Naive thymus-derived CD8-positive, alpha-beta T cell (primary cell): ENCODE measurements at regions of chr17 and their contacts with region 1.

Region 1: GRCh38 chr17:64420143-64420971 is 28.6 kb upstream of the MILR1 start:
- DNase-seq: peak in 6 of 10 donors; percentile 35 to 82 (median 62)
- ATAC-seq: peak; percentile 83 to 89
- H3K4me3 Mint-ChIP-seq: no peak overlapping the region
- H3K27ac Mint-ChIP-seq: no peak overlapping the region
- H3K4me1 Mint-ChIP-seq: peaks cover 0 to 4% (median 2%) of the 10 kb centered on the region in 4 donors
- H3K27me3 Mint-ChIP-seq: no peaks in the 10 kb centered on the region

Region 2: GRCh38 chr17:64306850-64307463 is 113.4 kb before region 1 on chr17:
- POLR2A ChIA-PET with region 1: interaction called, 10 read pairs
- DNase-seq: peak; percentile 47 to 82 (median 69)
- ATAC-seq: peak; percentile 63 to 75
- H3K4me3 Mint-ChIP-seq: no peak overlapping the region
- H3K27ac Mint-ChIP-seq: no peak overlapping the region
- H3K4me1 Mint-ChIP-seq: peaks cover 0 to 2% (median 1%) of the 10 kb centered on the region in 4 donors
- H3K27me3 Mint-ChIP-seq: peaks cover 0 to 2% (median 0%) of the 10 kb centered on the region in 5 donors

Region 3: GRCh38 chr17:64496786-64497564 is 76.6 kb after region 1 on chr17 and contains the start of gene POLG2:
- POLR2A ChIA-PET with region 1: interaction called, 15 read pairs
- DNase-seq: peak; percentile 94 to 97 (median 95)
- ATAC-seq: peak; percentile 76 to 80
- H3K4me3 Mint-ChIP-seq: peak within 1 kb of the TSS; percentile 98 to 100 (median 100)
- H3K27ac Mint-ChIP-seq: peak within 1 kb of the TSS; percentile 96 to 99 (median 98)
- H3K4me1 Mint-ChIP-seq: peaks cover 42 to 85% (median 80%) of the 10 kb centered on the region in 4 donors
- H3K27me3 Mint-ChIP-seq: no peaks in the 10 kb centered on the region
- polyA plus RNA-seq, gene POLG2: 6.4 to 8.6 (median 7.1) TPM